ENCODE measurements at regions of chr3 and their contacts with region 1.

Region 1: DNA sequence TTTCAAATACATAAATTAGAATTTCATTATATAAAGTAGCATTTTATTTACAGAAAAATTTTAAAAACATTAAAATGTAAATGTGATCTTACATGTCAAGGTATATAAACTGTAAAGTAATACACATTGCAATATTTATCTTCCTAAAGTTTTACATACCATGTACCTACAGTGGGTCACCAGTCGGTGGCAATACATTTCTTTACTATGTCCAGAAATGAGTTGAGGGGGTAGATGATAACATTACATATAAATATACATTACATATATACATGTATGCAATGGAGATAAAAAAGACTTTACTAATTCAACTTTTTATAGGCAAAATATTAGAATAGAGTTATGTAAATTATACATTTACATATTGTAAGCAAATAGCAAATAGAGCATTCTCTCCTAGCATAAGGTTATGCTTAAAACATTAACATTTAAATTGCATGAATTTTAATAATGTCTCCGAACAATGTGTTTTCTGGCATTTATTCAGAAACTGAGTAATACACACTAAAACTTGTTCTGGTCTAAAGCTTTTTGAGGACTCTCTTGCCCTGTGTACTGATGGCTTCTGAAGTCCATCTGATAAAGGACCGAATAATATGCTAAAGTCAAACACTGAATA is 93.3 kb upstream of the NLGN1 start:
- DNase-seq: no peak

Region 2: GRCh38 chr3:173241727-173242126 is 62.6 kb before region 1 on chr3:
- intact Hi-C with region 1: loop called in 1 of 2 experiments (anchors 2 kb)
- DNase-seq: no peak